Heart right ventricle (tissue), 16 donors: ENCODE measurements at regions of chrX and their contacts with region 1.

Region 1: GRCh38 chrX:14872851-14873675 is at the starts of genes FANCB and MOSPD2:
- DNase-seq: peak; percentile 93 to 94
- ATAC-seq: peak; percentile 99 to 100 (median 100)
- H3K4me3 ChIP-seq: peak within 1 kb of the TSS; percentile 47 to 83 (median 76)
- H3K27ac ChIP-seq: peak within 1 kb of the TSS in 8 of 10 donors; percentile 39 to 91 (median 80)
- H3K4me1 ChIP-seq: peaks cover 0 to 19% (median 6%) of the 10 kb centered on the region in 9 donors
- H3K27me3 ChIP-seq: no peaks in the 10 kb centered on the region
- CTCF ChIP-seq: no peak
- total RNA-seq, gene FANCB: 0.15 to 1.1 (median 0.48) TPM
- total RNA-seq, gene MOSPD2: 4.5 to 8.2 (median 5.3) TPM

Region 2: GRCh38 chrX:14309431-14309830 is 563.6 kb before region 1 on chrX:
- intact Hi-C with region 1: no loop called
- DNase-seq: no peak
- ATAC-seq: no peak
- H3K4me3 ChIP-seq: no peak overlapping the region
- H3K27ac ChIP-seq: no peak overlapping the region
- H3K4me1 ChIP-seq: no peaks in the 10 kb centered on the region
- H3K27me3 ChIP-seq: no peaks in the 10 kb centered on the region
- CTCF ChIP-seq: no peak

Region 3: GRCh38 chrX:14922437-14922836 is 49.4 kb after region 1 on chrX:
- intact Hi-C with region 1: loop called in 1 of 10 experiments (anchors 10 kb)
- DNase-seq: no peak
- ATAC-seq: peak in 3 of 8 donors; percentile 29 to 47 (median 39)
- H3K4me3 ChIP-seq: no peak overlapping the region
- H3K27ac ChIP-seq: no peak overlapping the region
- H3K4me1 ChIP-seq: peaks cover 0 to 4% (median 0%) of the 10 kb centered on the region in 9 donors
- H3K27me3 ChIP-seq: no peaks in the 10 kb centered on the region
- CTCF ChIP-seq: no peak